ENCODE measurements at regions of chr7 and their contacts with region 1.

Region 1: DNA sequence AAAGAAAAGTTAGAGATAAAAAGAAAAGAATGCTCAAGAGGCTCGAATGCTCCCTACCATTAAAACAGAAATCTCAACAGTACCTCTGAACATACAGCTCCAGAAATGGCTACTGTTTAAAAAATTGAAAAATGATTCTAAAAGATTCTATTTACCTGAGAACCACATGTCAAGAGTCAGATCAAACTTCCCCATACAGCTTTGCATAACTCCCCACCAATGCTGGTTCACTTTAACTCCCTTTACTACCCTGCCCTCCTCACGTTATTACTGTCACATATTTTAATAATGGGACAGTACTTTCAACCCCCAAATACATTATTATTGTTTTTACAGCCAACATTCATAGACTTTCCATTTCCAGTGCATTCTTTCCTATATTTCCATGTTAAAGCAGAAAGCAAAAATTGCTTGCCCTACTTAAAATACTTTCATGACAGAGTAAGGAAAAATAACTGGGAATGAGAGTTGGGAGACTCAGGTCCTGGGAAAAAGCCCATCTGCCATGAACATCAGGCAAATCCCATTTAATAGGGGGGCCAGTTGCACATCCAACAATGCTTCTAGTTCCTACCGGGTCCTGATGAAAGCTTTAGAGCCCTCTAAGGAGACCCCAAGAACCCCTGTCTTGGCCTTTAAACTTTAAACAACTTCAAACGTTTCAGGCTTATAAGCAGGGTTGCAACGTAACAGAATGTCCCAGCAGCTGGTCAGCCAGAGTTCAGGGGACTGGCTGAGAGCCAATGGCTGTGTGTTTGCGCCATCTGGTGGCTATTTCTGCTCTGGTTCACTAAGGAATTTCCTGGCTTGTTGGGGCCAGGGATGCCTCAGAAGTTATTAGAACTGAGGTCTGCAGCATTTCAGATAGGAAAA is 247.4 kb downstream of the ELMO1 start:
- DNase-seq: peak; percentile 76 to 86
- ATAC-seq: peak; percentile 85 to 96 (median 90)
- H3K4me3 ChIP-seq: no peak overlapping the region
- H3K27ac ChIP-seq: no peak overlapping the region
- H3K4me1 ChIP-seq: peaks cover 9% of the 10 kb centered on the region
- H3K27me3 ChIP-seq: no peaks in the 10 kb centered on the region
- CTCF ChIP-seq: peak; percentile 81

Region 2: GRCh38 chr7:36487756-36488336 is 713.4 kb before region 1 on chr7:
- intact Hi-C with region 1: loop called in 1 of 2 experiments (anchors 5 kb)
- DNase-seq: no peak
- ATAC-seq: peak in 1 of 4 donors; percentile 49
- H3K4me3 ChIP-seq: no peak overlapping the region
- H3K27ac ChIP-seq: no peak overlapping the region
- H3K4me1 ChIP-seq: no peaks in the 10 kb centered on the region
- H3K27me3 ChIP-seq: no peaks in the 10 kb centered on the region
- CTCF ChIP-seq: peak; percentile 58

Region 3: GRCh38 chr7:36967387-36967786 is 233.9 kb before region 1 on chr7:
- intact Hi-C with region 1: loop called (anchors 2 to 5 kb)
- DNase-seq: peak in 1 of 2 donors; percentile 36
- ATAC-seq: peak; percentile 75 to 93 (median 85)
- H3K4me3 ChIP-seq: no peak overlapping the region
- H3K27ac ChIP-seq: no peak overlapping the region
- H3K4me1 ChIP-seq: peaks cover 3% of the 10 kb centered on the region
- H3K27me3 ChIP-seq: no peaks in the 10 kb centered on the region
- CTCF ChIP-seq: peak; percentile 81

Region 4: DNA sequence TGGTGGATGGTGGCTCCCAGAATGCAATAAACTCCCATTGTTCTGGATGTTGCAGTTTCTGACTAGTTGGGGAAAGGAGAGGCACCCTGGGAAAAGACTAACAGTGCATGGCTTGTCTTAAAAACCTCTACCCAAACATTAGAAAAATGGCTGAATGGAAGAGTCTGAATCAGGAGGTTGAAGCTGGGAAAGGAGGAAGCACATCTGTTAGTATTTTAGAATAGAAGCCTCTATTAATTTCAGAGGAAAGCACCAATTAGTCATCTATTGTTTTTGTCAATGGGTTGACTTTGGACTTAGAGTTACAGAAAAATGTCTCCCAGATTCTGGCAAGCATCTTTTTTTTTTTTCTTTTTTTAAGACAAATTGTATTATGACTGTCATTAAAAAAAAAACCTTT is 303.6 kb after region 1 on chr7:
- intact Hi-C with region 1: loop called in 1 of 2 experiments (anchors 10 kb)
- DNase-seq: no peak
- ATAC-seq: no peak
- H3K4me3 ChIP-seq: no peak overlapping the region
- H3K27ac ChIP-seq: no peak overlapping the region
- H3K4me1 ChIP-seq: no peaks in the 10 kb centered on the region
- H3K27me3 ChIP-seq: no peaks in the 10 kb centered on the region
- CTCF ChIP-seq: no peak

Measured in psoas muscle (tissue), 8 donors.